ENCODE measurements at regions of chr7 and their contacts with region 1.

Region 1: DNA sequence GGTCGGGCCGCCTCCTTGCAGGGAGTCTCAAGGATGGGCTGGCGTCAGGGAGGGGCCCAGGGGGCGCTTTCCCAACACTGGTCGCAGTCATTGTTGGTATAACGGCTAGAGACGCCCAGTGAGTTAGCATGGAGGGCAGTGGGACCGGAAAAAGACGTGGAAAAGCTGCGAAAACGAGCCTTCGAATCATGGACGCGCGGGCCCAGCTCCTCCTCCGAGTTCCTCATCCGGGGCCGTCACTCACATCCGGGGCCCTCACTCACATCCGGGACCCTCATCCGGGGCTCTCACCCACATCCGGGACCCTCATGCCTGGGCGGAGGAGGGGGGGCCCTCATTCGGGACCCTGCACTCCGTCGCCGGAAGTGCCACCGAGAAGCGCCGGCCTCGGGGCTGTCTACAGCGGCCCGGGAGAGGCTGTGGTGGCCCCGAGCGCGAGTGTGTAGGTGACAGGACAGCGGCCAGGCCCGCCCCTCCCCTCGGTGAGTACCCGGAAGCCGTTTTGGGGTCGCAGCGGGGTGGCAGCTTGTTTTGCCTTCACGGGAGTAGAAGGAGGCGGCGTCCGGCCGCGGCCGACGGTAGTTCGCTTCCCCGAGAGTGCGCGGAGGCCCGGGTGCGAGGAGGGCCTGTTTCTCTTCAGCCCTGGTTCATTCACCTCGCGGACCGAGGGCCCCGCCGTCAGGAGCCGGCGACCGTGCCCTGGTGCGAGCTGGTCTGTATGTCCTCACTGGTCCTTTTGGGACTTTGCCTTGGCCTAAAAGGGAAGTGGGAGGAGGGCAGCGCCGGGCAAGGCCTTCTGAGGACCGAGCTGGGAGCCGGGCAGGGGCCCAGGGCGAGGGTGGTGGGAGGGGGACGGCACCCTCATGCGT is at the start of gene ZNF655:
- DNase-seq: peak; percentile 83 to 96 (median 88)
- ATAC-seq: peak; percentile 79
- H3K4me3 ChIP-seq: peak within 1 kb of the TSS; percentile 98
- H3K4me3 Mint-ChIP-seq: peak within 1 kb of the TSS; percentile 93
- H3K27ac ChIP-seq: peak within 1 kb of the TSS; percentile 95 to 96
- H3K27ac Mint-ChIP-seq: peak within 1 kb of the TSS; percentile 95
- H3K4me1 ChIP-seq: peaks cover 45% of the 10 kb centered on the region
- H3K4me1 Mint-ChIP-seq: peaks cover 58% of the 10 kb centered on the region
- H3K27me3 ChIP-seq: no peaks in the 10 kb centered on the region
- H3K27me3 Mint-ChIP-seq: no peaks in the 10 kb centered on the region
- CTCF ChIP-seq: no peak
- total RNA-seq, gene ZNF655: 145 to 146 TPM

Region 2: GRCh38 chr7:99465421-99465768 is 93.1 kb before region 1 on chr7:
- CTCF ChIA-PET with region 1: no interaction called
- POLR2A ChIA-PET with region 1: interaction called, 13 read pairs
- intact Hi-C with region 1: no loop called
- DNase-seq: no peak
- ATAC-seq: peak; percentile 7
- H3K4me3 ChIP-seq: peak overlapping the region; percentile 92
- H3K4me3 Mint-ChIP-seq: peak overlapping the region; percentile 92
- H3K27ac ChIP-seq: peak overlapping the region; percentile 64 to 68
- H3K27ac Mint-ChIP-seq: peak overlapping the region; percentile 91
- H3K4me1 ChIP-seq: peaks cover 51% of the 10 kb centered on the region
- H3K4me1 Mint-ChIP-seq: peaks cover 35% of the 10 kb centered on the region
- H3K27me3 ChIP-seq: no peaks in the 10 kb centered on the region
- H3K27me3 Mint-ChIP-seq: no peaks in the 10 kb centered on the region
- CTCF ChIP-seq: no peak

Region 3: DNA sequence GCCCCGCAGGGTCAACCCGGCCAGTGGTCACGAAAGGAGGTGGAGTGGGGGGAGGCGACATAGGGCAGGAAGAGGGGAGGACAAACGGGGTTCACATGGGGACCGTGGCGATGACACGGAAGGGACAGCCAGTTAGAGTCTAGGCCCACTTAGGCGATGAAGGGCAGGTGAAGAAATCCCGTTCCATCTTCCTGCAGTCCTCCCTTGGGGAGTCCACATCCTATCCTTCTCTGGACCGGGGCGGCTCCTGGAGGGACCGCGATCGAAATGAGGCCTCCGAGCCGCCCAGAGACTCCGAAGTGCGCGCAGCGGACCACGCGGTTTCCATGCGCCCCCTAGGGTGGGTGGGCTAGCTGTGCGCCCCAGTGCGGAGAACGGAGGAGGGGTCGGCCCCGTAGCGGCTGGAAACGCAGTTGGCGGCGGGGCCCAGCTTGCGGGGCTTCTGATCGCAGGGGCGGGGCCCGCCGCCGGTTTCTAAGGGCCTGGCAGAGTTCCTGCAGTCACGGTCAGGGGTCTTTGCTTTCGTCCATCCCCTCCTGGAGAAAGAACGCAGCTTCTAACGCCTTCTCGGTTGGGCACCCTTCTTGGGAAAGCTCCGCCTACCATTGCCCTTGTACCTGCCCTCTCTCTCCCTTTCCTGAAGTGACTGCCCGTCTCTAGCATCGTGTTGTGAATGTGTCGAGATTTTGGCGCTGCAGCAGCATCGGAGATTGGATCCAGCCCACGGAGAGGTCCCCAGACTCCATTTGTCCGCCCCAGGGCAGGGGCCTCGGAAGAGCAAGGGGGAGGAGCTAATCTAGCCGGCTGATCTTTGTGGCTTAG is 21.6 kb after region 1 on chr7:
- CTCF ChIA-PET with region 1: no interaction called
- POLR2A ChIA-PET with region 1: interaction called, 36 read pairs
- intact Hi-C with region 1: no loop called
- DNase-seq: peak; percentile 32 to 78 (median 58)
- ATAC-seq: peak; percentile 90
- H3K4me3 ChIP-seq: peak overlapping the region; percentile 57
- H3K4me3 Mint-ChIP-seq: peak overlapping the region; percentile 92
- H3K27ac ChIP-seq: no peak overlapping the region
- H3K27ac Mint-ChIP-seq: peak overlapping the region; percentile 73
- H3K4me1 ChIP-seq: peaks cover 14% of the 10 kb centered on the region
- H3K4me1 Mint-ChIP-seq: peaks cover 26% of the 10 kb centered on the region
- H3K27me3 ChIP-seq: no peaks in the 10 kb centered on the region
- H3K27me3 Mint-ChIP-seq: no peaks in the 10 kb centered on the region
- CTCF ChIP-seq: peak; percentile 54

Region 4: GRCh38 chr7:99616359-99617191 is 58.0 kb after region 1 on chr7 and contains the start of gene ZSCAN25:
- CTCF ChIA-PET with region 1: interaction called, 3 read pairs
- POLR2A ChIA-PET with region 1: interaction called, 36 read pairs
- intact Hi-C with region 1: loop called in 1 of 2 experiments (anchors 5 kb)
- DNase-seq: peak; percentile 73 to 93 (median 83)
- ATAC-seq: peak; percentile 94
- H3K4me3 ChIP-seq: peak within 1 kb of the TSS; percentile 96
- H3K4me3 Mint-ChIP-seq: peak within 1 kb of the TSS; percentile 99
- H3K27ac ChIP-seq: peak within 1 kb of the TSS; percentile 78 to 80
- H3K27ac Mint-ChIP-seq: peak within 1 kb of the TSS; percentile 92
- H3K4me1 ChIP-seq: peaks cover 20% of the 10 kb centered on the region
- H3K4me1 Mint-ChIP-seq: peaks cover 44% of the 10 kb centered on the region
- H3K27me3 ChIP-seq: no peaks in the 10 kb centered on the region
- H3K27me3 Mint-ChIP-seq: no peaks in the 10 kb centered on the region
- CTCF ChIP-seq: no peak
- total RNA-seq, gene ZSCAN25: 41.5 to 44.2 TPM

Region 5: DNA sequence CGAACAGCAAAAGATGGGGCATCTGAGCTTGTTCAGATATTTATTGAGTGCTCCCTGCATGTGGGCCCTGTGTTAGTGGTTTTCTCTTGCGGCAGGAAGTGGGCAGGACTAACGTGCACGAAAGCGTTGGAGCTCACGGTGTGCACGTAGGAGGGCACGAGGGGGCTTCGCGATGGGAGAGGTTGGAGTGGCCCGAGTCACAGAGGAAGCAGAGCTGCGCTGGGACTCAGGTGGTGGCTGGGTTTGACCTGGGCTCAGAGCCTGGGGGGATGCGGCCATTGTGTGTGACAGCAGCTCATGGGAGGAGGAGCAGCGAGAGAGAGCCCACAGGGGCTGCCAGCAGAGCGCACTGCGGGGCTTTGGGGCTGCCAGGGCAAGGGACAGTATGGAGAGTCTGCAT is 65.9 kb after region 1 on chr7:
- CTCF ChIA-PET with region 1: no interaction called
- POLR2A ChIA-PET with region 1: interaction called, 44 read pairs
- intact Hi-C with region 1: loop called in 1 of 2 experiments (anchors 5 kb)
- DNase-seq: peak; percentile 48 to 91 (median 63)
- ATAC-seq: peak; percentile 96
- H3K4me3 ChIP-seq: peak overlapping the region; percentile 46
- H3K4me3 Mint-ChIP-seq: peak overlapping the region; percentile 85
- H3K27ac ChIP-seq: peak overlapping the region; percentile 66 to 67
- H3K27ac Mint-ChIP-seq: peak overlapping the region; percentile 92
- H3K4me1 ChIP-seq: peaks cover 39% of the 10 kb centered on the region
- H3K4me1 Mint-ChIP-seq: peaks cover 49% of the 10 kb centered on the region
- H3K27me3 ChIP-seq: no peaks in the 10 kb centered on the region
- H3K27me3 Mint-ChIP-seq: no peaks in the 10 kb centered on the region
- CTCF ChIP-seq: no peak

Region 6: GRCh38 chr7:99794585-99795502 is 236.3 kb after region 1 on chr7:
- CTCF ChIA-PET with region 1: no interaction called
- POLR2A ChIA-PET with region 1: no interaction called
- intact Hi-C with region 1: no loop called
- DNase-seq: no peak
- ATAC-seq: no peak
- H3K4me3 ChIP-seq: no peak overlapping the region
- H3K4me3 Mint-ChIP-seq: no peak overlapping the region
- H3K27ac ChIP-seq: no peak overlapping the region
- H3K27ac Mint-ChIP-seq: no peak overlapping the region
- H3K4me1 ChIP-seq: no peaks in the 10 kb centered on the region
- H3K4me1 Mint-ChIP-seq: no peaks in the 10 kb centered on the region
- H3K27me3 ChIP-seq: no peaks in the 10 kb centered on the region
- H3K27me3 Mint-ChIP-seq: peaks cover 15% of the 10 kb centered on the region
- CTCF ChIP-seq: no peak

Region 7: GRCh38 chr7:99997545-99998137 is 439.1 kb after region 1 on chr7:
- CTCF ChIA-PET with region 1: no interaction called
- POLR2A ChIA-PET with region 1: no interaction called
- intact Hi-C with region 1: loop called in 1 of 2 experiments (anchors 5 kb)
- DNase-seq: peak; percentile 49 to 89 (median 68)
- ATAC-seq: peak; percentile 91
- H3K4me3 ChIP-seq: peak overlapping the region; percentile 48
- H3K4me3 Mint-ChIP-seq: peak overlapping the region; percentile 82
- H3K27ac ChIP-seq: peak overlapping the region; percentile 42 to 66
- H3K27ac Mint-ChIP-seq: peak overlapping the region; percentile 90
- H3K4me1 ChIP-seq: peaks cover 21% of the 10 kb centered on the region
- H3K4me1 Mint-ChIP-seq: peaks cover 22% of the 10 kb centered on the region
- H3K27me3 ChIP-seq: no peaks in the 10 kb centered on the region
- H3K27me3 Mint-ChIP-seq: no peaks in the 10 kb centered on the region
- CTCF ChIP-seq: no peak

Measured in CD4-positive, alpha-beta T cell (primary cell).